ENCODE measurements at regions of chr22 and their contacts with region 1.

Region 1: DNA sequence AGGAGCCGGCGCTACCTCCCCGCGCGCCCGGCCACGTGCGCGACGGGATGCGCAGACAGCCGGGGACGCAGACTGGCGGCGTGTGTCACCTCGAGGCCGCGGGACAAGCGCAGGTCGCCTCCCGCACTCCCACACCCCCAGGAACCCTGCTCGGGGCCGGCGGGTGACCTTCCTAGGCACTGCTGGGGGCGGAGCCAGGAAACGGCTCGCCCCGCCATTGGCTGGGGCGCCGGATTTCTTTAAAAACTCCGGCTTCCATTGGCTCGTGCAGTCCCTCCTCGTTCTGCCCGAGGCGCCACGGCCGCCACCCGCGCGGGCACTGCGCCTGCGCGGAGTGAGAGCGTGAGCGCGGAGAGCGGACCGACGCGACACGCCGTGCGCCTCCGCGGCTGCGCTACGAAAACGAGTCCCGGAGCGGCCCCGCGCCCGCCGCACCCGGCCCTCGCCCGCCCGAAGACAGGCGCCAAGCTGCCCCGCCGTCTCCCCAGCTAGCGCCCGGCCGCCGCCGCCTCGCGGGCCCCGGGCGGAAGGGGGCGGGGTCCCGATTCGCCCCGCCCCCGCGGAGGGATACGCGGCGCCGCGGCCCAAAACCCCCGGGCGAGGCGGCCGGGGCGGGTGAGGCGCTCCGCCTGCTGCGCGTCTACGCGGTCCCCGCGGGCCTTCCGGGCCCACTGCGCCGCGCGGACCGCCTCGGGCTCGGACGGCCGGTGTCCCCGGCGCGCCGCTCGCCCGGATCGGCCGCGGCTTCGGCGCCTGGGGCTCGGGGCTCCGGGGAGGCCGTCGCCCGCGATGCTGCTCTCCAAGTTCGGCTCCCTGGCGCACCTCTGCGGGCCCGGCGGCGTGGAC is at the start of gene PIM3:
- DNase-seq: peak; percentile 94
- ATAC-seq: peak; percentile 83
- H3K4me3 Mint-ChIP-seq: peak within 1 kb of the TSS; percentile 94
- H3K27ac Mint-ChIP-seq: peak within 1 kb of the TSS; percentile 85
- H3K4me1 Mint-ChIP-seq: peaks cover 13% of the 10 kb centered on the region
- H3K27me3 Mint-ChIP-seq: no peaks in the 10 kb centered on the region
- total RNA-seq, gene PIM3: 44.3 to 48.5 TPM

Region 2: GRCh38 chr22:49946612-49947295 is 13.6 kb before region 1 on chr22:
- POLR2A ChIA-PET with region 1: interaction called, 11 read pairs
- DNase-seq: no peak
- ATAC-seq: no peak
- H3K4me3 Mint-ChIP-seq: no peak overlapping the region
- H3K27ac Mint-ChIP-seq: peak overlapping the region; percentile 82
- H3K4me1 Mint-ChIP-seq: peaks cover 3% of the 10 kb centered on the region
- H3K27me3 Mint-ChIP-seq: no peaks in the 10 kb centered on the region

Region 3: GRCh38 chr22:49970528-49971231 is 10.3 kb after region 1 on chr22:
- POLR2A ChIA-PET with region 1: interaction called, 30 read pairs
- DNase-seq: peak; percentile 85
- ATAC-seq: peak; percentile 87
- H3K4me3 Mint-ChIP-seq: peak overlapping the region; percentile 85
- H3K27ac Mint-ChIP-seq: peak overlapping the region; percentile 90
- H3K4me1 Mint-ChIP-seq: peaks cover 13% of the 10 kb centered on the region
- H3K27me3 Mint-ChIP-seq: no peaks in the 10 kb centered on the region

Measured in activated naive CD8-positive, alpha-beta T cell treated with anti-CD3 and anti-CD28 coated beads, Interleukin-2, amount 10 ng/mL, durations not matched to agents 7 days and 5 days (primary cell).